ENCODE measurements at regions of chr4 and their contacts with region 1.

Region 1: DNA sequence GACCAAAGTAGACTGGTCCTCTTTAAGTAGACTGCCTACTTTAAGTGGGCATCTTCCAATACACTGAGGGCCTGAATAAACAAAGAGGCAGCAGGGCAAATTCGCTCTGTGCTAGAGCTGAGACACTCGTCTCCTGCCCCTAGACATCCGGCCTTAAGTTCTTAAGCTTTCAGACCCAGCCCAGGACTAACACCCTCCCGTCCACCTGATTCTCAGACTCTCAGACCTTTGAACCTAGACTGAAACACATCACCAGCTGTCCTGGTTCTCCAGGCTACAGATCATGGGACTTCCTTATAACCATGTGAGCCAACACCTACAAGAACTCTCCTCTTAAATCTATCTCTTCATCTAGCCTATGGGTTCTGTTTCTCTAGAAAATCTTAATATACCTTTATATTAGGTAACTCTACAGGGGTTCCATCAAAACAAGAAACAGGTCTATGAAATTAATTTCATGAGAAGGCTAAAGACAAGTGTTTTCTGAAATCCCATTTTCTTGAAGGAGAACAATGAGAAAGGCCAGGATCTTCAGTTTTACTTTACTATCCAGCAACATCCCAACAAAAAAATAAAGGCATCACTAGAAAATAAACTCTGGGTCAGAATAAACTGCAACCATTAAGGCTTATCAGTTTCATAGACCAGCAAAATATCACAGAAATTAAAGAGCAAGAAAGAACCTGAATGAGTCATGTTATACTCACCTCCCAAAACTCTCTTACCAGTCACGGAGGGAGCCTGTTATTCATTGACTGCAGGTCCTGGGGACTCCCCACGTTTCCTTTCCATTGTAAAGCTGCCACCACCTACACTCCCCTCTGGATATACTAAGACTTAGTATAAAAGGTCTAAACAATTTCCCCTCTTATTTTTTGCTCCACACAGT is 14.8 kb downstream of the ADGRA3 start:
- DNase-seq: no peak
- H3K4me3 Mint-ChIP-seq: peak overlapping the region; percentile 34
- H3K27ac Mint-ChIP-seq: peak overlapping the region; percentile 75
- H3K4me1 Mint-ChIP-seq: peaks cover 34% of the 10 kb centered on the region
- H3K27me3 Mint-ChIP-seq: no peaks in the 10 kb centered on the region

Region 2: DNA sequence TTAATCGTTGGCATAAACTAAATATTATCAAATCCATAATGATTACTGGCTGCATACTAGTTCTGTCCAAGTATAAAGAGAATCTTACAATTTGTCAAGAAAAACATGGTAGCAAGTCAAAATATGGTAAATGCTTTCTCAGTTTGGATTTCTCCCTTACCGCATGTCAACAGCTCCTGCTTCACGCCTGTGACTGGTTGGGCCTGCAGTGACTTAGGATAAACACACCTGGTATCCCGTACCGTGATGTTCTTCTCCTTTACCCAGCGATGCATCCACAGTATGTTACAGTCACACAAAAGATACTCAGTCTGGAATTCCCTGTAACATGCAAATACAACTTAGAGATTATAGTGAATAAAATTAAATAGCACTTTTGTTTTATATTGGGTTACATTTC is 56.3 kb before region 1 on chr4:
- intact Hi-C with region 1: loop called (anchors 1 kb)
- DNase-seq: no peak
- H3K4me3 Mint-ChIP-seq: peak overlapping the region; percentile 79
- H3K27ac Mint-ChIP-seq: peak overlapping the region; percentile 94
- H3K4me1 Mint-ChIP-seq: peaks cover 48% of the 10 kb centered on the region
- H3K27me3 Mint-ChIP-seq: no peaks in the 10 kb centered on the region

Region 3: GRCh38 chr4:22473268-22473667 is 27.8 kb before region 1 on chr4:
- intact Hi-C with region 1: no loop called
- DNase-seq: no peak
- H3K4me3 Mint-ChIP-seq: no peak overlapping the region
- H3K27ac Mint-ChIP-seq: no peak overlapping the region
- H3K4me1 Mint-ChIP-seq: peaks cover 18% of the 10 kb centered on the region
- H3K27me3 Mint-ChIP-seq: no peaks in the 10 kb centered on the region

Region 4: GRCh38 chr4:22515145-22515887 is 14.2 kb after region 1 on chr4:
- intact Hi-C with region 1: loop called (anchors 1 kb)
- DNase-seq: peak; percentile 46
- H3K4me3 Mint-ChIP-seq: peak overlapping the region; percentile 100
- H3K27ac Mint-ChIP-seq: peak overlapping the region; percentile 98
- H3K4me1 Mint-ChIP-seq: peaks cover 25% of the 10 kb centered on the region
- H3K27me3 Mint-ChIP-seq: no peaks in the 10 kb centered on the region

Region 5: DNA sequence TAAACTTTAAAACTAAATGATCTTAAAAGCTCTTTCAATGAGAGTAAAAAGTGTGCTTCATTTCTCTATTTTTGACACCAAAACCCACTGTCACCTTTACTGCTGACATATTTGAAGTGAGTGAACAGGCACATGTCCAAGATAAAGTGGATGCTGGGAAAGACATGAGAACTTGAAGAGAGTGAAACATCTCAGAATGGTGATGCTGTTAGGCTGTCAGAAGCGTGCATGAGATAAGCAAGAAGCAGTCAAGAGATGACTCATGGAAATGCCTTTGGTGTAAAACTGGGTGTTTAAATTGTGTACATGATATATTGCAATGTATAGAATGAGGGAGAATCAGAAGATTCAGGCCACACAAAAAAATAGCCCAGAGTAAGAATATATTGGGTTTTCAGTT is 169.9 kb after region 1 on chr4:
- intact Hi-C with region 1: loop called (anchors 5 kb)
- DNase-seq: no peak
- H3K4me3 Mint-ChIP-seq: no peak overlapping the region
- H3K27ac Mint-ChIP-seq: peak overlapping the region; percentile 9
- H3K4me1 Mint-ChIP-seq: peaks cover 53% of the 10 kb centered on the region
- H3K27me3 Mint-ChIP-seq: no peaks in the 10 kb centered on the region